OCI-LY7 (cell line): ENCODE measurements at regions of chr16 and their contacts with region 1.

Region 1: GRCh38 chr16:59400830-59401229 is 666.7 kb upstream of the GOT2 start:
- DNase-seq: no peak
- H3K4me3 ChIP-seq: no peak overlapping the region
- H3K27ac ChIP-seq: no peak overlapping the region
- H3K4me1 ChIP-seq: no peaks in the 10 kb centered on the region
- CTCF ChIP-seq: no peak

Region 2: GRCh38 chr16:59432896-59433295 is 32.1 kb after region 1 on chr16:
- CTCF ChIA-PET with region 1: no interaction called
- POLR2A ChIA-PET with region 1: no interaction called
- intact Hi-C with region 1: loop called (anchors 1 kb)
- DNase-seq: no peak
- H3K4me3 ChIP-seq: no peak overlapping the region
- H3K27ac ChIP-seq: no peak overlapping the region
- H3K4me1 ChIP-seq: no peaks in the 10 kb centered on the region
- CTCF ChIP-seq: no peak